MCF 10A (cell line): ENCODE measurements at regions of chr7 and their contacts with region 1.

Region 1: DNA sequence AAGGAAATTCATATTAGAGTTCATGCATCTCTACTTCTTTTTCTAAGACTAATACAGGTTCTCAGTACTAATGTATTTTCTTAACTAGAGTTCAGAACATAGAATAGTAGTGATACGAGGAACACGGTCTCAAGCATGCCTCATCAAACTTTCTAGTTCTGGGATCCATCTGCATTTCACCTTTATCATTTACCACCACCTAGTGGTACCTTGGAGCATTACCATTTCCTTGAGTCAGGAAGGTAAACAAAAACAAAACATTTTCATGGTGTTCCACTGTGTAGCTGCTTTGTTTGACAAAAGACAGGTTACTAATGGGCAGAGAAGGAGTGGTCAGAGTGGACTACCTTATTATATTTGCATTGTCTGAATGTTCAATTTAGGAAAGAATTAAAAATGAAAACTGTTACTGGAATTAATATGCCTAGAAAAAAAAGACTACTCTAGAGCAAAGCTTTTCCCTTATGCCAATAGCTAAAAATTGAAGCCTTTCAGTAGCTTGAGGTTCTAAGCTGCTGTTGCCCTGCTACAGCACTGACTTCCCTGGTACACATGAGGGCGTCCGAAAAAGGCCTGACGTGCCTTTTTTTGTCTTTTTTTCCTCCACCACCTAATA is 44.5 kb downstream of the STARD3NL start:
- DNase-seq: peak; percentile 71
- H3K4me3 Mint-ChIP-seq: no peak overlapping the region
- H3K27ac Mint-ChIP-seq: no peak overlapping the region
- H3K4me1 Mint-ChIP-seq: no peaks in the 10 kb centered on the region
- H3K27me3 Mint-ChIP-seq: no peaks in the 10 kb centered on the region
- CTCF ChIP-seq: peak; percentile 92

Region 2: GRCh38 chr7:37643876-37644275 is 578.7 kb before region 1 on chr7:
- CTCF ChIA-PET with region 1: no interaction called
- POLR2A ChIA-PET with region 1: no interaction called
- intact Hi-C with region 1: no loop called
- DNase-seq: no peak
- H3K4me3 Mint-ChIP-seq: no peak overlapping the region
- H3K27ac Mint-ChIP-seq: no peak overlapping the region
- H3K4me1 Mint-ChIP-seq: peaks cover 11% of the 10 kb centered on the region
- H3K27me3 Mint-ChIP-seq: no peaks in the 10 kb centered on the region
- CTCF ChIP-seq: no peak

Region 3: GRCh38 chr7:37901236-37901827 is 321.3 kb before region 1 on chr7:
- CTCF ChIA-PET with region 1: interaction called, 48 read pairs
- POLR2A ChIA-PET with region 1: no interaction called
- intact Hi-C with region 1: loop called (anchors 1 kb)
- DNase-seq: peak; percentile 53
- H3K4me3 Mint-ChIP-seq: no peak overlapping the region
- H3K27ac Mint-ChIP-seq: no peak overlapping the region
- H3K4me1 Mint-ChIP-seq: no peaks in the 10 kb centered on the region
- H3K27me3 Mint-ChIP-seq: peaks cover 35% of the 10 kb centered on the region
- CTCF ChIP-seq: peak; percentile 44

Region 4: GRCh38 chr7:37916673-37917660 is 305.6 kb before region 1 on chr7 and contains the start of gene SFRP4:
- CTCF ChIA-PET with region 1: interaction called, 12 read pairs
- POLR2A ChIA-PET with region 1: no interaction called
- intact Hi-C with region 1: no loop called
- DNase-seq: peak; percentile 52
- H3K4me3 Mint-ChIP-seq: no peak within 1 kb of the TSS
- H3K27ac Mint-ChIP-seq: no peak within 1 kb of the TSS
- H3K4me1 Mint-ChIP-seq: no peaks in the 10 kb centered on the region
- H3K27me3 Mint-ChIP-seq: peaks cover 38% of the 10 kb centered on the region
- CTCF ChIP-seq: peak; percentile 56
- total RNA-seq, gene SFRP4: not detected in 2 replicates

Region 5: GRCh38 chr7:38142736-38143135 is 79.9 kb before region 1 on chr7:
- CTCF ChIA-PET with region 1: interaction called, 10 read pairs
- POLR2A ChIA-PET with region 1: no interaction called
- intact Hi-C with region 1: loop called (anchors 2 kb)
- DNase-seq: no peak
- H3K4me3 Mint-ChIP-seq: no peak overlapping the region
- H3K27ac Mint-ChIP-seq: no peak overlapping the region
- H3K4me1 Mint-ChIP-seq: no peaks in the 10 kb centered on the region
- H3K27me3 Mint-ChIP-seq: peaks cover 48% of the 10 kb centered on the region
- CTCF ChIP-seq: no peak

Region 6: DNA sequence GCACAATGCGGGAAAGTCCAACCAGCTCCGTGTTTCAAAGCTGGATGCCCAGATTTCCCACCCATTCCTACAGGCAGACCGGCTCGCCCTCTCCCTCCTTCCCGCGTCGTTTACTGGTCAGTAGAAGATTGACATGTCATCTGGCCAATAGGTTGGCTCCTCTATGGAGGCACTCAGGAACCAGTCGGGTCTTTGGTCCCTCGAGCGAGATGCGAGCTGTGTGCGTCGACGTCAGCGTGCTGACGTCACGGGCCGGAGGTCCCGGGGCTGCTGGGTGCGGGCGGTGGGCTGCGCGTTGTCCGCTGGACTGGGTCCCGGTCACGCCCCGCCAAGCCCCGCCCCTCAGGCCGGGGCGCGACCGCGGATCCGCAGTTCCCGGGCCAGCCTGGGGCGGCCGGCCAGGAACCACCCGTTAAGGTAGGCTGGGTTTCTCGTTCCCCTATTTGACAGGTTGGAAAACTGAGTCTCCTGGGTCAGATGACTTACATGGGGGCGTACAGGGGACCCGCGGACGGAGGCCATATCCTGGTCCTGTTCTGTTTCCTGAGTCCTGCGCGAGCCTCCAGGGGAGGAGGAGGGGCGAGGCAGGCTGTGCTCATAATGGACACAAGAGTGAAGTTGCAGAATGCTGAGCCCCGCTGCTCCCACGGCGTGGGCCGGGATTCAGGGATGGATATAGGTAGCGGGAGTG is 44.4 kb before region 1 on chr7 and contains the start of gene STARD3NL:
- CTCF ChIA-PET with region 1: interaction called, 12 read pairs
- POLR2A ChIA-PET with region 1: interaction called, 3 read pairs
- intact Hi-C with region 1: no loop called
- DNase-seq: peak; percentile 100
- H3K4me3 Mint-ChIP-seq: peak within 1 kb of the TSS; percentile 99
- H3K27ac Mint-ChIP-seq: peak within 1 kb of the TSS; percentile 84
- H3K4me1 Mint-ChIP-seq: peaks cover 13% of the 10 kb centered on the region
- H3K27me3 Mint-ChIP-seq: peaks cover 19% of the 10 kb centered on the region
- CTCF ChIP-seq: no peak
- total RNA-seq, gene STARD3NL: 24.5 and 25.6 TPM in 2 replicates

Region 7: GRCh38 chr7:38195804-38196595 is 26.6 kb before region 1 on chr7:
- CTCF ChIA-PET with region 1: interaction called, 27 read pairs
- POLR2A ChIA-PET with region 1: interaction called, 3 read pairs
- intact Hi-C with region 1: no loop called
- DNase-seq: peak; percentile 55
- H3K4me3 Mint-ChIP-seq: peak overlapping the region; percentile 62
- H3K27ac Mint-ChIP-seq: peak overlapping the region; percentile 97
- H3K4me1 Mint-ChIP-seq: peaks cover 22% of the 10 kb centered on the region
- H3K27me3 Mint-ChIP-seq: no peaks in the 10 kb centered on the region
- CTCF ChIP-seq: no peak

Region 8: GRCh38 chr7:38318803-38319416 is 96.3 kb after region 1 on chr7:
- CTCF ChIA-PET with region 1: interaction called, 12 read pairs
- POLR2A ChIA-PET with region 1: no interaction called
- intact Hi-C with region 1: loop called (anchors 2 kb)
- DNase-seq: peak; percentile 68
- H3K4me3 Mint-ChIP-seq: no peak overlapping the region
- H3K27ac Mint-ChIP-seq: no peak overlapping the region
- H3K4me1 Mint-ChIP-seq: peaks cover 7% of the 10 kb centered on the region
- H3K27me3 Mint-ChIP-seq: peaks cover 26% of the 10 kb centered on the region
- CTCF ChIP-seq: peak; percentile 49